HEK293T (cell line): ENCODE measurements at regions of chr12 and their contacts with region 1.

Region 1: GRCh38 chr12:52327052-52327829 is 6.0 kb upstream of the KRT83 start:
- DNase-seq: peak; percentile 72

Region 2: DNA sequence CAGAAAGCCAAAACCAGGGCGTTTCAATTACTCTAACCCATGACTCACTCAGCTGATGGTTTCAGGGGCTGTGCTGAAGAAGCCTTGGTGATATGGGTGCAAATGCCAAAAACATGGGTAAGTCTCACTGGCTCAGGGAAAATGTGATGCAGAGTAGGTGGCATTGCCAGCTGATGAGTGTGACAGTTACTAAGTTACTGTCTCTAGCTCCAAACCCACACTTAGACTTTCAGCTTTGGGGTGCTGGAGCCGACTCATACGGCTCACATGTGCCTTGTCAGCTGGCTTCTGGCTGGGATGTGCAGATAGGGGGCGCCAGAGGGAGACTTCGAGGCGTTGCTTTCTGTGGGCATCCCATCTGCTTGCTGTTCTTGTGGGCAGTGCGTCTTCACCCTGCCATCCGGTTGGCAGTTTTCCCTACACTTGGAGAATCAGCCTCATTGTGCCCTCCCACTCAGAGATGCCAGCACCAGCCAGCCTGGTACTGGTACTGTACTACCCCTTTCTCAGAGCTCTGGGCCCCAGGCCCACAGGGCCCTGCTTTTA is 105.3 kb before region 1 on chr12:
- CTCF ChIA-PET with region 1: interaction called, 15 read pairs
- POLR2A ChIA-PET with region 1: no interaction called
- DNase-seq: peak; percentile 57

Region 3: DNA sequence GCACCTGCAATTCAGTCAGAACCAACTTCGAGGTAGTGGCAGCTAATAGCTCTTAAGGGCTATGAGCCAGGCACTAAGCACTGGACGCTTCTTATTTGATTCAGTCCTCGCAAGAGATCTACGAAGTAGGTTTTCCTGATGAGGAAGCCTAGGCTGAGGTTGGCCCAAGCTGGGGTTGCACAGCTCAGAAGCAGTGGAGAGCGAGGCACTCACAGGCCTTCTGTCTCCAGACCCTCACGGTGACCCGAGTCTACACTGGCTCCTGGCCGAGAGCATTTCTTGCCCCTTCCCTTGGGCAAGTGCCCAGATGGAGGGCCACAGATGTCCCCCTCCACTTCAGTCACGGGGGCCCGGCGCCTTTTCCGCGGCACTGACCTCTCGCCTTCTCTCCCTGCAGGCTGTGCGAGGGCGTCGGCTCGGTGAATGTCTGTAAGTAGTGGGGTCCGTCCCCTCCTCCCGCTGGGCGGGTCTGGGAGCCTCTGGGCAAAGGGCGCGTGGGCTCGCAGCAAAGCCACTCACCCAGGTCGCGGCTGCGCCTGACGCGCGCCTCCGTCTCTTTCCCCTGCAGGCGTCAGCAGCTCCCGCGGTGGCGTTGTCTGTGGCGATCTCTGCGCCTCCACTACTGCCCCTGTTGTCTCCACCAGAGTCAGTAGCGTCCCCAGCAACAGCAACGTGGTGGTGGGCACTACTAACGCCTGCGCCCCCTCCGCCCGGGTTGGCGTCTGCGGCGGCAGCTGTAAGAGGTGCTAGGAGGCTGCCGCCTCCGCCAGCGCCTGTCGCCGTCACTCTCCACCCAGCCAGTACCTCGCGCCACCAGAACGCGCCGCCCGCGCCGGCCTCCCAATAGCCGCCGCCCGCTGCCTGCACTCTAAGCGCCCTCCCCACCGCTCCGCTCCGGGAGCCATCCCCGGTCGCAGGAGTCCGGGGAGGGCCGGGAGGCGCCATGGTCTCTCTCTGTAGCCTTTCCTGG is 19.1 kb before region 1 on chr12:
- CTCF ChIA-PET with region 1: interaction called, 10 read pairs
- POLR2A ChIA-PET with region 1: no interaction called
- DNase-seq: peak; percentile 80

Region 4: DNA sequence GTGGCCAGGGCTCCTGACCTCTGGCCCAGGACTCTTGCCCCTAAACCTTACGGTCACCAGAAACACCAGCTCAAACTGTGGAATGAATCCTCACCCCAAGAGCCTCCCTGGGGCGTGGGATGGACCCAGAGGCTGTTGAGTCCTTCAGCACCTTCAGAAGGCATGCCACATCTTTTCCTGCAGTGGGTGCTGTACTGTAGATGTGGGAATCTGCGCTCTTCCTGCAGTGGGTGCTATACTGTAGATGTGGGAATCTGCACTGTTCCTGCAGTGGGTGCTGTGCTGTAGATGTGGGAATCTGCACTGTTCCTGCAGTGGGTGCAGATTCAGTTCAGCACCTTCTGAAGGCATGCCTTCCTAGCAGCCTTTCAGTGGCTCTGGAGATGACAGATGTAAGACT is 77.7 kb after region 1 on chr12:
- CTCF ChIA-PET with region 1: no interaction called
- POLR2A ChIA-PET with region 1: no interaction called
- DNase-seq: no peak